ENCODE measurements at regions of chr4 and their contacts with region 1.

Region 1: GRCh38 chr4:674172-675035 is at the starts of genes ATP5ME and MYL5:
- DNase-seq: peak; percentile 99
- ATAC-seq: peak; percentile 84
- H3K4me3 ChIP-seq: peak within 1 kb of the TSS; percentile 44 to 99 (median 92)
- H3K4me3 Mint-ChIP-seq: peak within 1 kb of the TSS; percentile 93
- H3K27ac ChIP-seq: peak within 1 kb of the TSS; percentile 92 to 97
- H3K27ac Mint-ChIP-seq: peak within 1 kb of the TSS; percentile 92
- H3K4me1 ChIP-seq: peaks cover 26 to 36% of the 10 kb centered on the region in 2 donors
- H3K4me1 Mint-ChIP-seq: peaks cover 28% of the 10 kb centered on the region
- H3K27me3 ChIP-seq: peaks cover 0 to 2% (median 0%) of the 10 kb centered on the region in 4 experiments
- H3K27me3 Mint-ChIP-seq: no peaks in the 10 kb centered on the region
- CTCF ChIP-seq: peak; percentile 86
- total RNA-seq, gene ATP5ME: 113 and 129 TPM in 2 replicates
- total RNA-seq, gene MYL5: 36.3 and 38.3 TPM in 2 replicates

Region 2: GRCh38 chr4:663438-664428 is 10.7 kb before region 1 on chr4:
- CTCF ChIA-PET with region 1: interaction called, 5 read pairs
- POLR2A ChIA-PET with region 1: interaction called, 11 read pairs
- intact Hi-C with region 1: loop called (anchors 1 kb)
- DNase-seq: peak; percentile 78
- ATAC-seq: peak; percentile 87
- H3K4me3 ChIP-seq: peak overlapping the region; percentile 68 to 85 (median 78)
- H3K4me3 Mint-ChIP-seq: peak overlapping the region; percentile 85
- H3K27ac ChIP-seq: peak overlapping the region; percentile 55 to 88
- H3K27ac Mint-ChIP-seq: peak overlapping the region; percentile 89
- H3K4me1 ChIP-seq: peaks cover 9 to 17% of the 10 kb centered on the region in 2 donors
- H3K4me1 Mint-ChIP-seq: peaks cover 11% of the 10 kb centered on the region
- H3K27me3 ChIP-seq: no peaks in the 10 kb centered on the region
- H3K27me3 Mint-ChIP-seq: no peaks in the 10 kb centered on the region
- CTCF ChIP-seq: peak; percentile 31

Region 3: DNA sequence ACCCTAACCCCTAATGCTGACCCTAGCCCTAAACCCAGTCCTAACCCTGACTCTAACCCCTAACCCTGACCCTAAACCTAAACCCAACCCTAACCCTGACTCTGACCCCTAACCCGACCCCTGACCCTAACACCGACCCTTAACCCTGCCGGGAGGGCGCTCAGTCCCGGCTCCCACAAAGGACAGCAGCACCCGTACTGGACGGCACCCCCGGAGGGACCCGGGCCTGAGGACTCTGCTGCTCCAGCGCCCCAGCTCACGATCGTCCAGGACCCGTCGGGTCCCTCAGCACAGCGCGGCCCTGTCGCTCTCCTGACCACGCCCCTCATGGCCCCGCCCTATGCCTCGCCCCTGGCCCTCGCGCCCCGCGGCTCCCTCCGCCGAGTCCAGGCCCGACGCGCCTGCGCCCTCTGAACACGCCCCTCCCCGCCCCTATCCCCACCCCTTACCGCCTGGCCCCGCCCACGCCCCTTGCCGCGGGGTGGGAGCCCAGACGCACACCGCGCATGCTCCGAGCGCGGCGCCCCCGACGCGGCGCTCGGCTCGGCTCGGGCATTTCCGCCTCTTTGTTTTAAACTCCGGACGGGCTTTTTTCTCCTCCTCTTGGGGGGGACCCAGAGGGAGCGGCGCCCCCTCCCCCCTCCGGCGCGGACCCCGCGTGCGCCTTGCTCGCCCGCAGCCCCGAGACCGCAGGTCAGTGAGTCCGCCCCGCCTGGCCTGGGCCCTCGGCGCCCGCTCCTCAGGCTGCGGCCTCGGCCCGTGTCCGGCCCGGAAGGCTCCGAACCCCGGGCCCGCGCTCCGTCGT is 31.1 kb after region 1 on chr4 and contains the start of gene PCGF3:
- CTCF ChIA-PET with region 1: no interaction called
- POLR2A ChIA-PET with region 1: no interaction called
- intact Hi-C with region 1: loop called (anchors 1 kb)
- DNase-seq: peak; percentile 94
- ATAC-seq: peak; percentile 98
- H3K4me3 ChIP-seq: peak within 1 kb of the TSS; percentile 42 to 90 (median 79)
- H3K4me3 Mint-ChIP-seq: peak within 1 kb of the TSS; percentile 90
- H3K27ac ChIP-seq: peak within 1 kb of the TSS; percentile 63 to 91
- H3K27ac Mint-ChIP-seq: peak within 1 kb of the TSS; percentile 93
- H3K4me1 ChIP-seq: peaks cover 17 to 30% of the 10 kb centered on the region in 2 donors
- H3K4me1 Mint-ChIP-seq: peaks cover 30% of the 10 kb centered on the region
- H3K27me3 ChIP-seq: no peaks in the 10 kb centered on the region
- H3K27me3 Mint-ChIP-seq: no peaks in the 10 kb centered on the region
- CTCF ChIP-seq: no peak
- total RNA-seq, gene PCGF3: 83.4 and 90.3 TPM in 2 replicates

Region 4: GRCh38 chr4:781493-782216 is 107.3 kb after region 1 on chr4:
- CTCF ChIA-PET with region 1: no interaction called
- POLR2A ChIA-PET with region 1: no interaction called
- intact Hi-C with region 1: loop called (anchors 2 kb)
- DNase-seq: peak; percentile 99
- ATAC-seq: peak; percentile 94
- H3K4me3 ChIP-seq: peak overlapping the region; percentile 23 to 97 (median 85)
- H3K4me3 Mint-ChIP-seq: peak overlapping the region; percentile 94
- H3K27ac ChIP-seq: peak overlapping the region; percentile 82 to 95
- H3K27ac Mint-ChIP-seq: peak overlapping the region; percentile 91
- H3K4me1 ChIP-seq: peaks cover 38 to 40% of the 10 kb centered on the region in 2 donors
- H3K4me1 Mint-ChIP-seq: peaks cover 48% of the 10 kb centered on the region
- H3K27me3 ChIP-seq: peaks cover 0 to 26% (median 11%) of the 10 kb centered on the region in 4 experiments
- H3K27me3 Mint-ChIP-seq: peaks cover 18% of the 10 kb centered on the region
- CTCF ChIP-seq: no peak

Region 5: GRCh38 chr4:891747-892146 is 217.3 kb after region 1 on chr4:
- CTCF ChIA-PET with region 1: no interaction called
- POLR2A ChIA-PET with region 1: no interaction called
- intact Hi-C with region 1: no loop called
- DNase-seq: no peak
- ATAC-seq: no peak
- H3K4me3 ChIP-seq: no peak overlapping the region
- H3K4me3 Mint-ChIP-seq: no peak overlapping the region
- H3K27ac ChIP-seq: no peak overlapping the region
- H3K27ac Mint-ChIP-seq: no peak overlapping the region
- H3K4me1 ChIP-seq: no peaks in the 10 kb centered on the region
- H3K4me1 Mint-ChIP-seq: no peaks in the 10 kb centered on the region
- H3K27me3 ChIP-seq: no peaks in the 10 kb centered on the region
- H3K27me3 Mint-ChIP-seq: no peaks in the 10 kb centered on the region
- CTCF ChIP-seq: no peak

Region 6: DNA sequence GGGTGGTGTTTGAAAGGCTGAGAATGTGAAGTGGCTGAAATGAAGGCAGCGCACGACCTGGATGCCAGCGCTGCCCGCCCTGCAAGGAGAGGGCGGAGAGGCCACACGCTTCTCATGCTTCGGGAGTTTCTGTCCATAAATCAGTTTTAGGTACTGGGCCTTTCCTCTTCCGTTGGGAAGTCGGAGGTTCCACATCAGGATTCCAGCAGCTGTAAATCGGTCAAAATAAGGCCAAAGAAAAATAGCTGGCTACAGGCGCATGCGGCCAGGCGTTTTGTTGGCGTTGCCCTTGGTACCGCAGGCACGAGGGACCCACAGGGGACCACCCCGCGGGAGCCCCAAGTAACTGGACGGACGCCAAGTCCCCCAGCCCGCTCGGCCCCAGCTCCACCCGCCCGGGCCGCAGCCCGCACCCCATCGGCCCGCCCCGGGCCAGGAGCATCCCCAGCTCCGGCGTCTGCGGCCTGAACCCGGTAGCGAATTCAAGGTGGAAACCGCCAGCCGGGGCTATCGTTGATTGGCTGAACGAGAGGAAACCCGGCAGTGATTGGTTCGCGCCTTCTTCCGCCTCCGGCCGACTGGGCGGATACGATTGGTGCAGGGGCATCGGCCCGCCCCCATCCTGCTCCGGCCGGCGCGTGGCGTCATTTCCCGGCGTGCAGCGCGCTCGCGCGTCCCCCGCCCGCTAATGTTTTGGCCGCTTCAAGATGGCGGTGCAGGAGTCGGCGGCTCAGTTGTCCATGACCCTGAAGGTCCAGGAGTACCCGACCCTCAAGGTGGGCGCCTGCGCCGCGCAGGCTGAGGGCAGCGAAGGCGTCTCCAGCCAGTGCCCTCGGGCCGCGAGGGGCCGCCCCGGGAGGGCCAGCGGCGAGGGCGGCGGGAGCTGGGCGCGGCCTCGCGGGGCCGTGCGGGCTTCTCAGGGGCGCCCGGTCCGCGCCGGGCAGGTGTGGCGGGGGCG is 615.1 kb after region 1 on chr4 and contains the start of gene MAEA:
- CTCF ChIA-PET with region 1: no interaction called
- POLR2A ChIA-PET with region 1: no interaction called
- intact Hi-C with region 1: loop called (anchors 10 kb)
- DNase-seq: peak; percentile 97
- ATAC-seq: peak; percentile 97
- H3K4me3 ChIP-seq: peak within 1 kb of the TSS; percentile 66 to 83 (median 79)
- H3K4me3 Mint-ChIP-seq: peak within 1 kb of the TSS; percentile 94
- H3K27ac ChIP-seq: peak within 1 kb of the TSS; percentile 65 to 88
- H3K27ac Mint-ChIP-seq: peak within 1 kb of the TSS; percentile 86
- H3K4me1 ChIP-seq: peaks cover 34 to 43% of the 10 kb centered on the region in 2 donors
- H3K4me1 Mint-ChIP-seq: peaks cover 38% of the 10 kb centered on the region
- H3K27me3 ChIP-seq: no peaks in the 10 kb centered on the region
- H3K27me3 Mint-ChIP-seq: no peaks in the 10 kb centered on the region
- CTCF ChIP-seq: no peak
- total RNA-seq, gene MAEA: 103 and 106 TPM in 2 replicates

Measured in B cell (primary cell).